Cardiac septum (tissue), 1 donor: ENCODE measurements at regions of chr1 and their contacts with region 1.

Region 1: GRCh38 chr1:17531682-17532487 is 7.6 kb upstream of the ARHGEF10L start:
- DNase-seq: peak; percentile 76

Region 2: GRCh38 chr1:17587989-17588685 is 56.3 kb after region 1 on chr1:
- intact Hi-C with region 1: loop called (anchors 5 kb)
- DNase-seq: peak; percentile 84

Region 3: GRCh38 chr1:17742583-17742982 is 210.7 kb after region 1 on chr1:
- intact Hi-C with region 1: no loop called
- DNase-seq: no peak